ENCODE measurements at regions of chr10 and their contacts with region 1.

Region 1: GRCh38 chr10:132359305-132360040 is 27.5 kb downstream of the LRRC27 start:
- DNase-seq: no peak
- H3K4me3 ChIP-seq: no peak overlapping the region
- H3K27ac ChIP-seq: no peak overlapping the region
- H3K4me1 ChIP-seq: no peaks in the 10 kb centered on the region
- H3K27me3 ChIP-seq: no peaks in the 10 kb centered on the region
- CTCF ChIP-seq: no peak
- POLR2A ChIP-seq: no peak

Region 2: DNA sequence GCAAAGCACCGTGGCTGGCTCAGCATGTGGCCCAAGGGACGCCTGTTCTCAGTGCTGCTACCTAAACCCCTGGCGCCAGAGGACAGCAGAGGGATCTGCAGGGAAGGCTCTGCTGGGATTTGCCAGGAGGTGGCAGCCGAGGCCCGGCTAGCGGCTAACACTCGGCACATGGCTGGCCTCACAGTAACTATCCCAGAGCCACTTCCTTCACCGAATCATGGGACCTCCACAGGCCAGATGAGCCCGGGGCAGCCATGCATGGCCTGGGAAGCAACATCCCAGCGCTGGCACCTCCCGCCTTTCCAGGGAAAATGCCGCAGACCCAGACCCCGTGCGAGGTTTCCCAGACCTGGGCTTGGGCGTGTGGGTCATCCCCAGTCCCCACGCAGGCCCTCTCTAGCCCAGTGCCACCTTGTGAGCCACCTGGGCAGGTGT is 136.3 kb before region 1 on chr10:
- intact Hi-C with region 1: loop called (anchors 10 kb)
- DNase-seq: peak; percentile 87
- H3K4me3 ChIP-seq: no peak overlapping the region
- H3K27ac ChIP-seq: no peak overlapping the region
- H3K4me1 ChIP-seq: no peaks in the 10 kb centered on the region
- H3K27me3 ChIP-seq: no peaks in the 10 kb centered on the region
- CTCF ChIP-seq: peak; percentile 86 to 88 (median 86)
- POLR2A ChIP-seq: no peak

Region 3: DNA sequence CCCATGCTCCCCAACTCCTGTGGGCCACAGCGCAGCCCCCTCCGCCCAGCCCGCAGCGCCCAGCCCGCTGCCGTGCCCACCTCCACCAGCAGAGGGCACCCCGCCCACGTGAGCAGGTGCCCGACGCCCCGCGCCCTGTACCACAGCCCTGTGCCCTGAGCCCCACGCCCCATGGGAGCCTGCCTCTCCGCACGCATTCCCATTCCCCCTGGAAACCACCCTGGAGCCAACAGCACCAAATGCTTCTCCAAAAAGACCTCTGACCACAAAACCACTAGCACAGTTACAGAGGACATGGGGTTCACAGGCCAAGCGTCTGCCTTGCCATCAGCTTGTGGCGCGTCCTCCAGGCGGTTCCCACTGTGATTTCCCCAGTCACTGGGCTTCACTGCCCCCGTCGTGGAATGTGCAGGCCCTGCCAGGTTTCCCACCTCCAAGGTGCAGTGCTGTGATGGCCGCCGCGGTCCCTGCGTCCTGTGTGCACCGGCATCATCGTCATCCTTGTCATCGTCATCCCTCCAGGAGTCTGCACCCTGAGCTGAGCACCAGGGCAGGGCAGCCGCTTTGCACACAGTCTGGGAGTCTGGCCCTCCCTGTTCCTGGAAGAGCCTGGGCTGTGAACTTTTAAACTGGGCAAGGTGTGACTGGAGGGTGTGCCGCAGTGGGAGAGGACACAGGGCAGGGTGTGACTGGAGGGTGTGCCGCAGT is 99.3 kb after region 1 on chr10:
- intact Hi-C with region 1: no loop called
- DNase-seq: no peak
- H3K4me3 ChIP-seq: no peak overlapping the region
- H3K27ac ChIP-seq: no peak overlapping the region
- H3K4me1 ChIP-seq: peaks cover 32% of the 10 kb centered on the region
- H3K27me3 ChIP-seq: no peaks in the 10 kb centered on the region
- CTCF ChIP-seq: peak; percentile 92 to 98 (median 93)
- POLR2A ChIP-seq: no peak

Measured in testis (tissue), 5 donors.